Mucosa of descending colon (tissue), 3 donors: ENCODE measurements at regions of chr11 and their contacts with region 1.

Region 1: GRCh38 chr11:5476184-5476819 is 12.2 kb upstream of the OR52D1 start:
- DNase-seq: peak in 1 of 3 donors; percentile 47
- ATAC-seq: peak; percentile 66
- H3K4me3 ChIP-seq: no peak overlapping the region
- H3K4me1 ChIP-seq: no peaks in the 10 kb centered on the region
- CTCF ChIP-seq: peak; percentile 76

Region 2: DNA sequence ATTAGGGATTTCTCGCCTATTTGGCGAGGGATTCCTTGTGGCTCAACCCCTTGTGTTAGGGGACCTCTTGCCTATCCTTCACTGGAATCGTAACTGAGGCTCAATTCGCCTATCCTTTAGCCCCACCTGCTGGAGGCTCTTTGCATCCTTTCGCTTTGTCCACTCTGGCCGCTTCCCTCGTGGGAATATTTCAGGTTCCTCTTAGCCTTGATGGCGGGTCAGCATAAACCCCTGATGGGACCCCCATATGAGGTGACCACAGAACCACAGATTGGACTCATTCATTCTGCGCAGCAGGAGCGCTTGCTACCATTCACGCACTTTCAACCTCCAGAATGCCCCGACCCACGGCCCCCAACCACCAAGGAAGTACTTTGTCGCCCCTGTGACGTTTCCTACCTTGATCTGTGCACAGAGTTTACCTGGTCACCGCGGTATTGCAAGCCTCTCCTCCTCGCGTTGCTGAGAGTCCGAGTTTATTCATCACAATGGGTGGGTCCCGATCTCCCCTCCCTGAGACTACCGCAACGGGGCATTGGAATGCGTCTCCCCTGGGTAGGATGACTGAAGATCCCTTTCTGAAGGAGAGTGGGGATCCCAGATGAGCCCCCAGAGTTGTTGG is 332.3 kb after region 1 on chr11 and contains the start of gene OR52N2:
- intact Hi-C with region 1: loop called (anchors 5 to 10 kb)
- DNase-seq: peak in 2 of 3 donors; percentile 62 to 87
- ATAC-seq: peak; percentile 89
- H3K4me3 ChIP-seq: no peak within 1 kb of the TSS
- H3K4me1 ChIP-seq: no peaks in the 10 kb centered on the region
- CTCF ChIP-seq: peak; percentile 62
- total RNA-seq, gene OR52N2: not detected